Mammary epithelial cell (primary cell): ENCODE measurements at regions of chr14 and their contacts with region 1.

Region 1: DNA sequence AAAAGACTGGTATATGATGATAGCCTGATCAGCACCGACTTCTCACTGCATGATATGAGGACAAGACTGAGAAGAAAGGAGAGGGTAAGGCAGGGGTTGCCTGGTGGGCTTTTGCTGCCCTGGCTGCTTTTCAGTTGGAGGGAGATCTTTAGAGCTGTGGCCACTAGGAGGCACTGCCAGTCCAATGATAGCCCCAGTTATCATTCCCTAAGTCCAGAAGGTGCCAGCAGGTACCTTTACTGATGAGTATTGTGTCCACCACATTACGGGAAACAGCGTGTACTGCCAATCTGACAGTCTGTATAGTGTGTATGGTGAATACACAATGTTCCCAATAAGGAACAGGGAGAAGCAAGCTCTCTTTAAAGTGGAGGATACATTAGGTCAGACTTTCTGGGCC is 55.8 kb upstream of the CCDC175 start:
- DNase-seq: peak; percentile 16
- H3K4me3 ChIP-seq: no peak overlapping the region
- H3K27ac ChIP-seq: no peak overlapping the region
- H3K4me1 ChIP-seq: peaks cover 4% of the 10 kb centered on the region
- H3K27me3 ChIP-seq: peaks cover 10% of the 10 kb centered on the region
- CTCF ChIP-seq: peak; percentile 68 to 75

Region 2: DNA sequence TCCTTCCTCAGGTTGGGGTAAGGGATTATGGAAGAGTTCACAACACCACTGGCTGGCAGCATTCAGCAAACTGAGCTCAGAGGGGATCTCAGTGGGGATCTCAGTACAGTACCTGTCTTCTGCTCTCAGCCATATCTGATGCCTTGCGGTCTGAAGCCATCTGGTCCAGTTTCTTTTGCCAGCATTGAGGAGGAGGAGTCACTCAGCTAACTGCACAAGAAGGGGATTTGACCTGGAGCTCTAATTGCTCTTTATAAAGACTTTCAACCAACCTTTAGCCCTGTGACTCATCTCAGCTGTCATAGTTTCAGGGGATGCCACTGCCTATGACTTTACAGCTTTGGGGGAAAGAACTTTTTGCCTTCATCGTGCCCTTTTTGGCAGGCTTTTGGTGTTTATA is 103.2 kb before region 1 on chr14:
- CTCF ChIA-PET with region 1: no interaction called
- dilution Hi-C with region 1: no loop called
- in situ Hi-C with region 1: no loop called
- intact Hi-C with region 1: no loop called
- DNase-seq: no peak
- H3K4me3 ChIP-seq: no peak overlapping the region
- H3K27ac ChIP-seq: no peak overlapping the region
- H3K4me1 ChIP-seq: no peaks in the 10 kb centered on the region
- H3K27me3 ChIP-seq: no peaks in the 10 kb centered on the region
- CTCF ChIP-seq: no peak

Region 3: DNA sequence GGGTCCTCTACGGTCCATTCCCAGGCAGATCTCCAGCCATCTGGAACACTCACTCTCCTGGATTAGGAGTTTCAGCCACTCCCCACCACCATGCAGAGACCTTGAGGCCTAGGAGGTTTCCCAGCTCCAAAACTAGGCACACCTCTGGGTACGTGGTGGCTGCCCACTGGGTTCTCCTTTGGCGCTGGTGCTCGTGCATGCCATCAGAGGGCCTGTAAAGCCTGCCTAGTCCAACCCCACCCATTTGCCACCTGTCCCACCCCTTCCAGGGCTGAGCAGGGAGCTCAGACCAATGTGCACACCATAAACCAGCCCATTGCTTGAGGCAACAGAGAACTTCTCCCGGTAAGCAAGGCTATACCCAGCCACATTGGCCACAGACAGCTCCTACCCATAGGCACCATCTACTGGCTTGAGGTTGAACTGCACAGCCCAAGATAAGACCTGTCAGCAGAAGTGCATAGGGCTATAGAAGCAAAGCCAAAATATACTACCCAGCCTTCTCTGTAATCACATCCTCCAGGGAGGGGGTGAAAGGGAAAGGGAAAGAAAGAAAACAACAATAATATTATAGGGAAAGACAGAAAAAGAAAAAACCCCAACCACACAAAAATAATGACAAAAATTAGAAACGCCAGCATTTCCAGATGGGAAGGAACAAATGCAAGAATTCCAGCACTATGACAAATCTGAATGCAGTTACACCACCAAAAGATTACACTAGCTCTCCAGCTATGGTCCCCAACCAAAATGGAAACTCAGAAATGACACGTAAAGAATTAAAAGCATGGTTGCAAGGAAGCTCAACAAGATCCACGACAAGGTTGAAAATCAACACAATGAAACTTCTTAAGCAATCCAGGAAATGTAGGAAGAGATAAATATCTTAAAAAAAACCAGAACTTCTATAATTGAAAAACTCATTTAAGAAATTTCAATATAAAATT is 56.1 kb after region 1 on chr14:
- CTCF ChIA-PET with region 1: interaction called, 8 read pairs
- dilution Hi-C with region 1: no loop called
- in situ Hi-C with region 1: no loop called
- intact Hi-C with region 1: loop called (anchors 1 kb)
- DNase-seq: peak; percentile 32
- H3K4me3 ChIP-seq: no peak overlapping the region
- H3K27ac ChIP-seq: no peak overlapping the region
- H3K4me1 ChIP-seq: no peaks in the 10 kb centered on the region
- H3K27me3 ChIP-seq: no peaks in the 10 kb centered on the region
- CTCF ChIP-seq: peak; percentile 70 to 87

Region 4: GRCh38 chr14:59897761-59898383 is 265.5 kb after region 1 on chr14:
- CTCF ChIA-PET with region 1: no interaction called
- dilution Hi-C with region 1: no loop called
- in situ Hi-C with region 1: loop called in 1 of 2 experiments (anchors 10 kb)
- intact Hi-C with region 1: loop called (anchors 1 kb)
- DNase-seq: peak; percentile 14
- H3K4me3 ChIP-seq: no peak overlapping the region
- H3K27ac ChIP-seq: no peak overlapping the region
- H3K4me1 ChIP-seq: no peaks in the 10 kb centered on the region
- H3K27me3 ChIP-seq: peaks cover 3% of the 10 kb centered on the region
- CTCF ChIP-seq: peak; percentile 44 to 69

Region 5: GRCh38 chr14:59905188-59905587 is 272.8 kb after region 1 on chr14:
- CTCF ChIA-PET with region 1: no interaction called
- dilution Hi-C with region 1: no loop called
- in situ Hi-C with region 1: loop called in 1 of 2 experiments (anchors 10 kb)
- intact Hi-C with region 1: no loop called
- DNase-seq: no peak
- H3K4me3 ChIP-seq: no peak overlapping the region
- H3K27ac ChIP-seq: no peak overlapping the region
- H3K4me1 ChIP-seq: no peaks in the 10 kb centered on the region
- H3K27me3 ChIP-seq: no peaks in the 10 kb centered on the region
- CTCF ChIP-seq: no peak

Region 6: GRCh38 chr14:59918824-59919569 is 286.6 kb after region 1 on chr14:
- CTCF ChIA-PET with region 1: no interaction called
- dilution Hi-C with region 1: no loop called
- in situ Hi-C with region 1: loop called in 1 of 2 experiments (anchors 10 kb)
- intact Hi-C with region 1: loop called (anchors 1 kb)
- DNase-seq: no peak
- H3K4me3 ChIP-seq: peak overlapping the region; percentile 29 to 48 (median 35)
- H3K27ac ChIP-seq: no peak overlapping the region
- H3K4me1 ChIP-seq: peaks cover 9% of the 10 kb centered on the region
- H3K27me3 ChIP-seq: peaks cover 19% of the 10 kb centered on the region
- CTCF ChIP-seq: peak; percentile 41 to 43

Region 7: DNA sequence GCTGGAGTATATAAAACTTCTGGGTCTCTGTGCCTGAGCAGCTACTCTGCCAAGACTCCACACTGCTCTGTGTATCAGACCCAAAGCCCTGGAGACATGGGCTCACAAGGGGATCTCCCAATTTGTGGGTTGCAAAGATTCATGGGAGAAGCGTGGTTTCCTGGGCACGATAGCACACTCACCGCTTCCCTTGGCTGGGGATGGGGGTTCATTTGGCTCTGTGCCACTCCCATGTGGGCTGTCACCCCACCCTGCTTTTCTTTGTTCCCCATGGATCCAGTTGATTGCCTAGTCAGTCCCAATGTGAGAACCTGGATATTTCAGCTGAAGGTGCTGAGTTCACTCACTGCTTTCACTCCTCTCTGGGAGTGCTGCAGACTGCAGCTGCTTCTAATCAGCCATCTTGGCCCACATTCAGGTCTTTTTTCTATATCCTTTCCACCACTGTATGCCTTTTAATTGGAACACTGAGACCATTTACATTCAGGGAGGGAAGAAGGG is 419.4 kb after region 1 on chr14:
- CTCF ChIA-PET with region 1: no interaction called
- dilution Hi-C with region 1: no loop called
- in situ Hi-C with region 1: no loop called
- intact Hi-C with region 1: loop called (anchors 10 kb)
- DNase-seq: no peak
- H3K4me3 ChIP-seq: no peak overlapping the region
- H3K27ac ChIP-seq: no peak overlapping the region
- H3K4me1 ChIP-seq: no peaks in the 10 kb centered on the region
- H3K27me3 ChIP-seq: peaks cover 2% of the 10 kb centered on the region
- CTCF ChIP-seq: no peak

Region 8: GRCh38 chr14:60184146-60184904 is 551.9 kb after region 1 on chr14:
- CTCF ChIA-PET with region 1: no interaction called
- dilution Hi-C with region 1: no loop called
- in situ Hi-C with region 1: no loop called
- intact Hi-C with region 1: loop called (anchors 1 kb)
- DNase-seq: peak; percentile 39
- H3K4me3 ChIP-seq: peak overlapping the region; percentile 4 to 50 (median 37)
- H3K27ac ChIP-seq: peak overlapping the region; percentile 40
- H3K4me1 ChIP-seq: peaks cover 18% of the 10 kb centered on the region
- H3K27me3 ChIP-seq: no peaks in the 10 kb centered on the region
- CTCF ChIP-seq: peak; percentile 60 to 65